GM12878 (cell line): ENCODE measurements at regions of chr16 and their contacts with region 1.

Region 1: GRCh38 chr16:22898874-22899348 is 84.9 kb downstream of the HS3ST2 start:
- DNase-seq: peak; percentile 1
- ATAC-seq: peak; percentile 60
- H3K4me3 ChIP-seq: no peak overlapping the region
- H3K27ac ChIP-seq: no peak overlapping the region
- H3K4me1 ChIP-seq: no peaks in the 10 kb centered on the region
- H3K27me3 ChIP-seq: peaks cover 2 to 3% of the 10 kb centered on the region in 2 experiments; a peak in 1 of 4 replicates
- CTCF ChIP-seq: peak; percentile 45 to 65 (median 55)
- EP300 ChIP-seq: no peak
- POLR2A ChIP-seq: no peak
- RAD21 ChIP-seq: peak; percentile 46

Region 2: GRCh38 chr16:22705799-22706198 is 193.1 kb before region 1 on chr16:
- CTCF ChIA-PET with region 1: no interaction called
- POLR2A ChIA-PET with region 1: no interaction called
- RAD21 ChIA-PET with region 1: no interaction called
- SMC1A ChIA-PET with region 1: no interaction called
- in situ Hi-C with region 1: no loop called
- intact Hi-C with region 1: no loop called
- DNase-seq: no peak
- ATAC-seq: no peak
- H3K4me3 ChIP-seq: no peak overlapping the region
- H3K27ac ChIP-seq: no peak overlapping the region
- H3K4me1 ChIP-seq: no peaks in the 10 kb centered on the region
- H3K27me3 ChIP-seq: peaks cover 0 to 3% of the 10 kb centered on the region in 2 experiments; a peak in 2 of 4 replicates
- CTCF ChIP-seq: no peak
- EP300 ChIP-seq: no peak
- POLR2A ChIP-seq: no peak
- RAD21 ChIP-seq: no peak

Region 3: DNA sequence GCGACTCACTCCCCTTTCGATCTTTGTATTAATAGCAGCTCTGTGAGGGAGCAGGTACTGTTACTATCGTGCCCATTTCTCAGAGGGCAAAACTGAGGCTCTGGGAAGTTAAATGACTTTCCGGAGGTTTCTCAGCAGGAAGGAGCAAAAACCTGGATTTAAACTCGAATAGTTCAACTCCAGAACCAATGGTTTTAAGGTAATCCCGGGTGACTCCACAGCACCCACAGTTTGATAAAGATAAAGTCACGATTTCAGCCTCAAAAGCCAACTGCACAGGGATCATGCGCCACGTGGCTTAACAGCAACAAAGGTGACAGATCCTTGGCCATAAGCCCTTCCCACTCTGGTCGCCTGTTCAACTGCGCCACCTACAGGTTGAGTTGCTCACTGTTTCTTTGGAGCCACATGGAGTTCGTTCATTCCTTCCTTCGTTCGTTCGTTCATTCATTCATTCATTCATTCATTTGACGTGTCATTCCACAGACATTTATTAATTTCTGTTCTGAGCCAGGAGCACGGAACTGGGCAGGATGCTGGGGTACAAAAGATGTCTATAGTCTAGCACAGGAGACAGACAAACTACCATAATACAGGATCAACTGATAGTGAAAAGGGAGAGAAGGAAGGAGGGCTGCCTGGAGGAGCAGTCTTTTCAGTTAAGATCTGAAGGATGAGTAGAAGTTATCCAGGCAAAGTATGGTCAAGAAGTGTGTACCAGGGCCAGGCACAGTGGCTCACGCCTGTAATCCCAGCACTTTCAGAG is 49.9 kb after region 1 on chr16:
- CTCF ChIA-PET with region 1: interaction called, 4 read pairs
- POLR2A ChIA-PET with region 1: no interaction called
- RAD21 ChIA-PET with region 1: interaction called, 3 read pairs
- SMC1A ChIA-PET with region 1: interaction called, 4 read pairs
- in situ Hi-C with region 1: no loop called
- intact Hi-C with region 1: loop called (anchors 5 kb)
- DNase-seq: peak; percentile 8
- ATAC-seq: peak; percentile 86
- H3K4me3 ChIP-seq: no peak overlapping the region
- H3K27ac ChIP-seq: no peak overlapping the region
- H3K4me1 ChIP-seq: no peaks in the 10 kb centered on the region
- H3K27me3 ChIP-seq: peaks cover 2 to 5% of the 10 kb centered on the region in 2 experiments; a peak in 3 of 4 replicates
- CTCF ChIP-seq: peak; percentile 65 to 74 (median 72); a peak in 5 of 6 replicates
- EP300 ChIP-seq: no peak
- POLR2A ChIP-seq: no peak
- RAD21 ChIP-seq: peak; percentile 67

Region 4: GRCh38 chr16:23060458-23061320 is 161.8 kb after region 1 on chr16:
- CTCF ChIA-PET with region 1: interaction called, 10 read pairs
- POLR2A ChIA-PET with region 1: no interaction called
- RAD21 ChIA-PET with region 1: interaction called, 4 read pairs
- SMC1A ChIA-PET with region 1: interaction called, 6 read pairs
- in situ Hi-C with region 1: no loop called
- intact Hi-C with region 1: loop called (anchors 1 kb)
- DNase-seq: peak; percentile 7
- ATAC-seq: peak; percentile 91
- H3K4me3 ChIP-seq: no peak overlapping the region
- H3K27ac ChIP-seq: no peak overlapping the region
- H3K4me1 ChIP-seq: no peaks in the 10 kb centered on the region
- H3K27me3 ChIP-seq: no peaks in the 10 kb centered on the region
- CTCF ChIP-seq: peak; percentile 78 to 83 (median 79)
- EP300 ChIP-seq: no peak
- POLR2A ChIP-seq: no peak
- RAD21 ChIP-seq: peak; percentile 79